Dendritic cell treated with granulocyte-macrophage colony-stimulating factor and Interleukin-4, amounts not matched to agents 40 ng/mL and 50 ng/mL, for 4 days (primary cell): ENCODE measurements at regions of chr3 and their contacts with region 1.

Region 1: GRCh38 chr3:134600685-134601463 is 49.9 kb downstream of the KY start:
- H3K4me3 Mint-ChIP-seq: no peak overlapping the region
- H3K27ac Mint-ChIP-seq: no peak overlapping the region
- H3K4me1 Mint-ChIP-seq: peaks cover 52% of the 10 kb centered on the region
- H3K27me3 Mint-ChIP-seq: no peaks in the 10 kb centered on the region

Region 2: DNA sequence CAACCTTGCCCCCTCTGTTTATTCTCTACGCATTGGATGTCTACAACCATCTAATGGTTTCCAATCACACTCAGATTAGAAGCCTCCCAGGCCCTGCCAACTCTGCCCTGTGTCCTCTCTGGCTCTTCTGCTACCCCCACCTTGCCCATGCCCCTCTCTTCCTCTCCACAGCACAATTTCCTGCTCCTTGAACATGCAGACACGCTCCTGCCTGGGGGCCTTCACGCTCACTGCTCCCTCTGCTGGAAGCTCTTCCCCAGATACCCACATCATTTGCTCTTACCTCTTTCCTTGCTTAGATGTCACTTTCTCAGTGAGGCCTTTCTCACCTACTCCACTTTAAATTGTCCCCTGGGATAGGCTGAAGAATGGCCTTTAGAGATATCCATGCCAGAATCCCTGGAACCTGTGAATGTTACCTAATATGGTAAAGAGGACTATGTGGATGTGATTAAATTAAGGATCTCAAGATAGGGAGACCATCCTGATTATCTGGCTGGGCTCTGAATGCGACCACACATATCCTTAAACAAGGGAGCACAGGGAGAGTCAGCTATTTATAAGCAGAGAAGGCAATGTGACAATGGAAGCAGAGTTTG is 40.1 kb after region 1 on chr3:
- intact Hi-C with region 1: loop called (anchors 1 kb)
- H3K4me3 Mint-ChIP-seq: no peak overlapping the region
- H3K27ac Mint-ChIP-seq: no peak overlapping the region
- H3K4me1 Mint-ChIP-seq: peaks cover 6% of the 10 kb centered on the region
- H3K27me3 Mint-ChIP-seq: no peaks in the 10 kb centered on the region

Region 3: DNA sequence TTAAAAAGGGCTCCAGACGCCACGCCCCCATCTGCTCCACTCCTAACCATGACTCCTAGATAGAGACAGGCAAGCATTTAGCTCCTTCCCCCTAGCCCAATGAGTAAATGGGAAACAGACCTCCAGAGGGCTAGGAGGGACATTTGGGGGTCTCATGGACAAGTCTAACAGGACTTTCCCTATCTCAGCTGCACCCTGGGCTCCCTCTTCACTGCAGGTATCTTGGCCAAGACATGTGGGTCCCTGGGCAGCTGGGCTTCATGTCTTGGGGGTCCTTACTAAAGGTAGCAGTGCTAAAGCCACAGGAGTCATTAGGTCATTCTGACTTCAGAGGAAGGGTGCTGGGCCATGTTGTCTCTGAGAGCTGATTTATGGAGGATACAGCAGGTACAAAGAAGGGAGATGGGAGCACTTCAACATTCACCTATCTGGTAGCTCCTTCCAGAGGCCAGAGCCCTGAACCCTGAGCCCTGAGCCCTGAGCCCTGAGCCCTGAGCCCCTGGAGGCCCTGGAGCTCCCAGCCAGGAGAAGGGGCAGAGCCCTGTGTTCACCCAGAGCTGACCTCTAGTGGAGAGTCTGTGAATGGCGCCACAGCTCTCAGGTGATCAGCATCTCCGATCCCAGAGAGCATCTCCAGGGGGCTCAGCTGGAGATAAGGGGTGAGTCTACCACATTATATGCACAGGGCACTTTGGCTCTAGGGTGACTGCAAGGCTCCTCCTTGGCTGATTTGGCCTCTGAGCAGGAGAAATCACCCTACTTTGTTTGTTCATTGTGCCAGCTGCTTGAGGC is 154.1 kb after region 1 on chr3:
- intact Hi-C with region 1: loop called (anchors 1 kb)
- H3K4me3 Mint-ChIP-seq: no peak overlapping the region
- H3K27ac Mint-ChIP-seq: no peak overlapping the region
- H3K4me1 Mint-ChIP-seq: no peaks in the 10 kb centered on the region
- H3K27me3 Mint-ChIP-seq: peaks cover 4% of the 10 kb centered on the region

Region 4: DNA sequence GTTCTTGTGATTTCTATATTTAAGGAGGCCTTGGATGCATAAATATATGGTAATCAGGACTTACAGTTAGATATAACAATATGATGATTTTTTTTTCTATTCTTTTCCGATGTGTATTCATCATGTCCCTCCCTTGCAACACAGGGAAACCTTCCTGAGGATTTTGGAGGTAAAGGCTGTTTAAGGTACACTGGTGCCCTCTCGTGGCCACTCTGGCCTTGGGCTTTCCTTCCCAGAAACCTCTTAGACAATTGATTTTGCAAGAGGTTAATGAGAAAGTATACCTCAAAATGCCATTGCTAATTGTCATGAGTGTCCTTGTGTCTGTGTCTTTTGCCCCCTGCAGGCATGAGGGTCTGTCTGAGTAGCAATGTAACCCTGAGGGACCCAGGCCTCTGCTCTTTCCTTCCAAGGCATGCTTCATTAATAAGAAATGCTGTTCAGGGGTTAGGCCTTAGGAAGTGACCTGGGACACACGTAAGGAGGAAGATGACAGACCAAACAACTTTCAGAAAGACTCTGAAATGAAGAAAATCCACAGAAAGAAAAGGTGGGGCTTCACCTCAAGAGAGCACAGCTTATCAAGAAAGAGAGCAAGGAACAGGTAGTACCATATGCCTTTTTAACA is 1294.3 kb after region 1 on chr3:
- intact Hi-C with region 1: loop called (anchors 2 kb)
- H3K4me3 Mint-ChIP-seq: no peak overlapping the region
- H3K27ac Mint-ChIP-seq: no peak overlapping the region
- H3K4me1 Mint-ChIP-seq: no peaks in the 10 kb centered on the region
- H3K27me3 Mint-ChIP-seq: no peaks in the 10 kb centered on the region